Activated T-helper 2 cell treated with anti-CD3 and anti-CD28 coated beads, Interferon-gamma antibody, Interleukin-2, Interleukin-4, amounts not matched to agents 10 μg/mL and 5 μg/mL and 100 μg/mL, durations not matched to agents 14 hours and 24 hours and 36 hours (primary cell): ENCODE measurements at regions of chr3 and their contacts with region 1.

Region 1: DNA sequence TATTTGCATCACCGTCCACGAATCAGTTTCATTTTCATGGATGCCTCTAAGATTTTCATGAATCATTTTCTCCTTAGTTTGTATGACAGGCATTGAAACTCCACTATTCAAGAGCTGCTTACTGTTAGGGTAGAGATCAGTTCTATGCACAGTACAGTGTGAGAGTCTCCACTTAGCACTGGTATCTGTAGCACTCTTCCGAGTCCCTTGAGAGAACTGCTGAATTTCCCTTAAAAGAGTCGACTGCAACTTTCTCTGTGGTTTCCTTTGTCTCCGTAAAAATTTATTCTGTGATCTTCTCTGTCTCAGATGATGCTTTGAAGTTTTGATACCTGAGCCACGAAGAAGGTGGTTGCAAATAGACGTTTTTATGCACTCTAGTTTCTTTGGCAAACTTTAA is 14.8 kb downstream of the GTPBP8 start:
- DNase-seq: no peak
- H3K4me3 Mint-ChIP-seq: peak overlapping the region; percentile 66
- H3K27ac Mint-ChIP-seq: peak overlapping the region; percentile 84
- H3K4me1 Mint-ChIP-seq: peaks cover 66% of the 10 kb centered on the region
- H3K27me3 Mint-ChIP-seq: no peaks in the 10 kb centered on the region

Region 2: GRCh38 chr3:112990672-112991602 is 14.7 kb before region 1 on chr3 and contains the start of gene GTPBP8:
- intact Hi-C with region 1: loop called (anchors 1 kb)
- DNase-seq: peak; percentile 79
- H3K4me3 Mint-ChIP-seq: peak within 1 kb of the TSS; percentile 80
- H3K27ac Mint-ChIP-seq: peak within 1 kb of the TSS; percentile 84
- H3K4me1 Mint-ChIP-seq: peaks cover 49% of the 10 kb centered on the region
- H3K27me3 Mint-ChIP-seq: no peaks in the 10 kb centered on the region
- total RNA-seq, gene GTPBP8: 17.6 and 22.7 TPM in 2 replicates